AG04450 (cell line): ENCODE measurements at regions of chr10 and their contacts with region 1.

Region 1: GRCh38 chr10:63866075-63866746 is 345.0 kb downstream of the REEP3 start:
- DNase-seq: no peak
- H3K4me3 ChIP-seq: no peak overlapping the region
- H3K27ac ChIP-seq: no peak overlapping the region
- H3K27me3 ChIP-seq: peaks cover 10% of the 10 kb centered on the region
- CTCF ChIP-seq: peak; percentile 88

Region 2: DNA sequence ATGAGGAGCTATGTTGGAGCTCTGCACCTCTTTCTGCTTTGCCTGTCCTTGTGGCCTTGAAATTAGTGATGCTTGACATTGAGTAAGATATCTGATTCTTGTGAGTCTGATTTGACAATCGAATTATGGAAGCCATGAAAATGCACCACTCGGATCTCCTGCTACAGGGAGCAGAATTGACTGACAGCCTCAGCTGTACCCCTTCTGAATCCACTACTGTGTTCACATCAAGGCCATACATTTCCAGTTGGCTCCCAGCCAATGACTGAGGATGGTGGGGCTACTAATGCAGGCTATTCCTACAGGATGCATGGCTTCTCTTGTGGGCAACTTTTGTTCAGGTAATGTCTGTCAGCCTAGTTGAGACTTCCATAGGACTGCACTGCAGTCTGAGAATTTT is 23.1 kb before region 1 on chr10:
- CTCF ChIA-PET with region 1: interaction called, 12 read pairs
- POLR2A ChIA-PET with region 1: no interaction called
- DNase-seq: no peak
- H3K4me3 ChIP-seq: no peak overlapping the region
- H3K27ac ChIP-seq: no peak overlapping the region
- H3K27me3 ChIP-seq: no peaks in the 10 kb centered on the region
- CTCF ChIP-seq: no peak

Region 3: GRCh38 chr10:63878428-63878827 is 12.2 kb after region 1 on chr10:
- CTCF ChIA-PET with region 1: interaction called, 11 read pairs
- POLR2A ChIA-PET with region 1: no interaction called
- DNase-seq: no peak
- H3K4me3 ChIP-seq: no peak overlapping the region
- H3K27ac ChIP-seq: no peak overlapping the region
- H3K27me3 ChIP-seq: no peaks in the 10 kb centered on the region
- CTCF ChIP-seq: no peak

Region 4: GRCh38 chr10:63976538-63976937 is 110.3 kb after region 1 on chr10:
- CTCF ChIA-PET with region 1: interaction called, 10 read pairs
- POLR2A ChIA-PET with region 1: no interaction called
- DNase-seq: no peak
- H3K4me3 ChIP-seq: no peak overlapping the region
- H3K27ac ChIP-seq: no peak overlapping the region
- H3K27me3 ChIP-seq: no peaks in the 10 kb centered on the region
- CTCF ChIP-seq: peak; percentile 46